Right lobe of liver (tissue), 6 donors: ENCODE measurements at regions of chr4 and their contacts with region 1.

Region 1: DNA sequence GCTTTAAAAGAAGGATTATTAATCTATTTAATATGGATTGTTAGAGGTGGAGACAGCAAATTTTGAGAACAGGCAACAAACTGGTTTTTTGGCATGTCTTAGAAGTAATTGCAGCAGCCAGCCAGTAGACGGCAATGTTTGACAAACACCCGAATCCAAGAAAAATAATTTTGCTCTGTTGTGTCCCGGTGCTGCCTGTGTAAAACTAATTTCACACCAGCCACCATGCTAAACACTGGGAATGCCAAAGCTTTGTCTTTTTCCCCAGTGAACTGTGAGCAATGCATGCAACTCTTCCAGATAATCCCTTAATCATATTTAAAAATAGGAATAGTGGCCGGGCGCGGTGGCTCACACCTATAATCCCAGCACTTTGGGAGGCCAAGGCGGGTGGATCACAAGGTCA is 25.9 kb downstream of the SMIM31 start:
- DNase-seq: no peak
- ATAC-seq: peak; percentile 66 to 85 (median 78)
- H3K4me3 ChIP-seq: no peak overlapping the region
- H3K27ac ChIP-seq: no peak overlapping the region
- H3K4me1 ChIP-seq: no peaks in the 10 kb centered on the region
- H3K27me3 ChIP-seq: no peaks in the 10 kb centered on the region
- CTCF ChIP-seq: peak; percentile 63 to 77 (median 70)
- POLR2A ChIP-seq: no peak

Region 2: DNA sequence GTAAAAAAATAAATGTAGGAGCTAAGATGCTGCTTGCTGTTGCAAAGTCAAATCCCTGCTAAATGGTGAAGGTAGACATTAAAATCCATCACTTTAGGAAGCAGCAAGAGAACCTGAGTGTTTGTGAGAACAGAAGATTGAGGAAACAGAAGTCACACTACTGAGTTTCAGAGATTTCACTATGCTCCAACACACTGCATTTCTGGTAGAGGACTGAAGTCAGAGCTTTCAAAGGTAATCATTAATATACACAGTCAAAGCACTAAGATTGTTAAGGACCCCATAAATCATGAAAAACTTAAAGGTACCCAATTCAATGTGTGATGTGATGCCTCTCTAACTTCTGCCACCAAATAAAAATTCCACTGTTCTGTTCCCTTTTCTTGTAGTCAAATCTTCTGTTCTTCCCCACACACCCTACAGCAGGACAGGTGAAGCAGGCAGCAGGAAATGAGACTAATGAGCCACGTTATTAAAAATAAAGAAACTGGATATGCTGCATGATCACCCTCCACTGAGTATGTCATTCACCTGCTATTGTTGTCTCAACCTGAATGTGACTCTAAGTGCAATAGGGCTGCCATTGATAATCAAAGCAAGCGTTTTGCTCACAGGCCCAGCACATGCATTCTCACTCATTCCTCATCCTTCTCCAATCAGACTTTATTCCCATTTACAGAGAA is 68.3 kb after region 1 on chr4:
- intact Hi-C with region 1: no loop called
- DNase-seq: no peak
- ATAC-seq: no peak
- H3K4me3 ChIP-seq: no peak overlapping the region
- H3K27ac ChIP-seq: no peak overlapping the region
- H3K4me1 ChIP-seq: no peaks in the 10 kb centered on the region
- H3K27me3 ChIP-seq: no peaks in the 10 kb centered on the region
- CTCF ChIP-seq: no peak
- POLR2A ChIP-seq: no peak

Region 3: GRCh38 chr4:165096776-165097175 is 317.0 kb after region 1 on chr4:
- intact Hi-C with region 1: loop called in 1 of 2 experiments (anchors 10 kb)
- DNase-seq: no peak
- ATAC-seq: peak in 3 of 4 donors; percentile 35 to 54 (median 42)
- H3K4me3 ChIP-seq: no peak overlapping the region
- H3K27ac ChIP-seq: no peak overlapping the region
- H3K4me1 ChIP-seq: no peaks in the 10 kb centered on the region
- H3K27me3 ChIP-seq: no peaks in the 10 kb centered on the region
- CTCF ChIP-seq: peak; percentile 19 to 53 (median 48)
- POLR2A ChIP-seq: no peak